Activated T-helper 1 cell treated with anti-CD3 and anti-CD28 coated beads, Interleukin-12 subunit alpha, Interleukin-12 subunit beta, Interleukin-2, Interleukin-4 antibody, amounts not matched to agents 30 ng/mL and 10 ng/mL and 1 ng/mL, durations not matched to agents 14 hours and 24 hours and 36 hours (primary cell): ENCODE measurements at regions of chr1 and their contacts with region 1.

Region 1: GRCh38 chr1:198937231-198938031 is 298.6 kb downstream of the PTPRC start:
- DNase-seq: peak; percentile 71
- H3K4me3 Mint-ChIP-seq: no peak overlapping the region
- H3K27ac Mint-ChIP-seq: peak overlapping the region; percentile 93
- H3K4me1 Mint-ChIP-seq: peaks cover 33% of the 10 kb centered on the region
- H3K27me3 Mint-ChIP-seq: no peaks in the 10 kb centered on the region

Region 2: GRCh38 chr1:198657550-198658064 is 279.8 kb before region 1 on chr1:
- intact Hi-C with region 1: loop called (anchors 5 kb)
- DNase-seq: no peak
- H3K4me3 Mint-ChIP-seq: peak overlapping the region; percentile 63
- H3K27ac Mint-ChIP-seq: peak overlapping the region; percentile 84
- H3K4me1 Mint-ChIP-seq: peaks cover 68% of the 10 kb centered on the region
- H3K27me3 Mint-ChIP-seq: no peaks in the 10 kb centered on the region

Region 3: DNA sequence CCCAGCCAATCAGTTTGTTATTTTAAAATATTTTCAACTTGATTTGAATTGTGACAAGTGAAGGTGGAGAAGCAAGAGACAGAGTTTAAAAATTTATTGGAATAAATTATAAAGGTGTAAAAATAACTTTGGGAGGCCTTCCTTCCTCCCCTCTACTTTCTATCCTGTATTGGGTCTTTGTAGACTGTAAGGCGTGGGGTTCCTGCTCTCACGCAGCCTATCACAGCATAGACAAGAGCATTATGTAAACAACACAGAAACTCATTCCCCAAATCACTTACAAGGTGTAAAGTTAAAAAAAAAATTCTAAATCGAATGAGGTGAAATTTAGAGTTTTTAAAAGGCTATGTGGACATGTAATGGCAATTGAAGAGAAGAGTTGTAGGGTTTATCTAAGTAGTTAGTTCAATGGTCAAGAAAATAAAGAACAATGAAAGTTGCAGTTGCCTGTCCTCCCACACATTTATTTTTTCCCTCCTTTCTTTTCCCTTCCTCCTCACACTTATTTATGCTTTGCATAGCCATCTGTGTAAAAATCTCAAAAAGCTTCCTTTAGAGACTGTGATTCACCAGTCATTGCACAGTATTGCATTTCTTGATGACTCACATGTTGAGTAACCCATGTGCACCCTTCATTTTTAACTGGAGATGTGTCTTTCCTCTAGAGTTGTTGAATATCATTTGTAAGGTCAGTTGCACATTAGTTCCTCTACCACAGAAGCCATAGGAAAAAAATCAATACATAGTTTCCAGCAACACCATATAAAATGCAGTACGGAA is 56.4 kb before region 1 on chr1:
- intact Hi-C with region 1: loop called (anchors 1 kb)
- DNase-seq: no peak
- H3K4me3 Mint-ChIP-seq: no peak overlapping the region
- H3K27ac Mint-ChIP-seq: peak overlapping the region; percentile 71
- H3K4me1 Mint-ChIP-seq: peaks cover 59% of the 10 kb centered on the region
- H3K27me3 Mint-ChIP-seq: no peaks in the 10 kb centered on the region

Region 4: GRCh38 chr1:198922638-198923430 is 14.6 kb before region 1 on chr1:
- intact Hi-C with region 1: loop called (anchors 1 kb)
- DNase-seq: no peak
- H3K4me3 Mint-ChIP-seq: peak overlapping the region; percentile 78
- H3K27ac Mint-ChIP-seq: peak overlapping the region; percentile 90
- H3K4me1 Mint-ChIP-seq: peaks cover 90% of the 10 kb centered on the region
- H3K27me3 Mint-ChIP-seq: no peaks in the 10 kb centered on the region

Region 5: DNA sequence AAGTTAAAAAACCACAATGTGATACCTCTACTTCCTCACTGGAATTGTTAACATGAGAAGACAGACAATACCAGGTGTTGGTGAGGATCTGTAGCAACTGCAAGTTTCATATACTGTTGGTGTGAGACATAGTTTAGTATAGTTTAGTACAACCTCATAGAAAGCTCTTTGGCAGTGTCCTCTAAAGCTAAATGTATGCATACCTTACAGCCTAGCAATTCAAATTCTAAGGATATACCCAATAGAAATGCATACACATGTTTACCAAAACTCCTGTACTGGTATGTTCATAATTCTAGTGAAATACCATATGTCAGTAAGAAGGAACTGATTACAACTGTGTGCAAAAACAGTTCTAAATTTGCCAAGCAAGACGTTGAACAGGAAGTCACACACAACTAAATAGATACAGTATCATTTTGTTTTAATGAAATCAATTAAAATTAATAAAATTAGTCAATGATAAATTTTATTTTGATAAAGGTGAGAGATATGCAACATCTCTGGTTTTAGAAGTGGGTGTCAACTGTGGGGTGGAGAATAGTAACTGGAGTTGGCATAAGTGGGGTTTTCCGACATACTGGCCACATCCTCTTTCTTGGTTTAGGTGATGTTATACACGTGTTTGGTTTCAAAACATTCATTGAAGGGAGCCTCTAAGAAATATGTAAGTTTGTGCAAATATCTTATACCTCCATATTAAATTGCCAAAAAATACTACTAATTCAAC is 152.1 kb after region 1 on chr1:
- intact Hi-C with region 1: loop called (anchors 1 kb)
- DNase-seq: peak; percentile 57
- H3K4me3 Mint-ChIP-seq: peak overlapping the region; percentile 32
- H3K27ac Mint-ChIP-seq: peak overlapping the region; percentile 71
- H3K4me1 Mint-ChIP-seq: peaks cover 53% of the 10 kb centered on the region
- H3K27me3 Mint-ChIP-seq: no peaks in the 10 kb centered on the region

Region 6: DNA sequence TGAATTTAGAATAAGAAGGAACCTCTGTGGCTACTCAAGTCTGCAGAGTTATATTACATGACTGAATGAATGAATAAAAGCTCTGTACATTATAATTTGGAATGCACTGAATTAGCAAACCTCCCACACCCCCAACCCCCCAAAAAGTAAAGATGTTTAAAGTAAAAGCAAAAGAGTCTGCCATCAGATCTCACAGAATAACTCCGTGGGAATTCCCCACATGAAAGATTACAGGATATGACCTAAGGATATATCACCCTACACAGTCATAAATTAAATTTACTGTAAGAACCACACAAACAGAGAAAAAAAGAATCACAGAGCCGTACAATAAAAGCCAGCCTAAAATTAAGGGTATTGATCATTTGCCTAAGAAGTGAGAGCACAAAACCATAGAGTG is 288.7 kb after region 1 on chr1:
- intact Hi-C with region 1: loop called (anchors 1 kb)
- DNase-seq: peak; percentile 26
- H3K4me3 Mint-ChIP-seq: peak overlapping the region; percentile 37
- H3K27ac Mint-ChIP-seq: peak overlapping the region; percentile 51
- H3K4me1 Mint-ChIP-seq: peaks cover 21% of the 10 kb centered on the region
- H3K27me3 Mint-ChIP-seq: peaks cover 6% of the 10 kb centered on the region